Activated CD4-positive, alpha-beta memory T cell treated with anti-CD3 and anti-CD28 coated beads, Interleukin-2, amount 10 ng/mL, durations not matched to agents 7 days and 5 days (primary cell): ENCODE measurements at regions of chr19 and their contacts with region 1.

Region 1: GRCh38 chr19:10269333-10270179 is 1.4 kb upstream of the ICAM1 start:
- DNase-seq: peak; percentile 91
- H3K4me3 Mint-ChIP-seq: peak overlapping the region; percentile 83
- H3K27ac Mint-ChIP-seq: peak overlapping the region; percentile 93
- H3K4me1 Mint-ChIP-seq: peaks cover 45% of the 10 kb centered on the region
- H3K27me3 Mint-ChIP-seq: peaks cover 1% of the 10 kb centered on the region

Region 2: GRCh38 chr19:10279737-10280442 is 10.3 kb after region 1 on chr19:
- CTCF ChIA-PET with region 1: interaction called, 10 read pairs
- POLR2A ChIA-PET with region 1: interaction called, 105 read pairs
- DNase-seq: no peak
- H3K4me3 Mint-ChIP-seq: no peak overlapping the region
- H3K27ac Mint-ChIP-seq: peak overlapping the region; percentile 61
- H3K4me1 Mint-ChIP-seq: peaks cover 27% of the 10 kb centered on the region
- H3K27me3 Mint-ChIP-seq: no peaks in the 10 kb centered on the region

Region 3: GRCh38 chr19:10332955-10333757 is 63.6 kb after region 1 on chr19 and contains the start of gene RAVER1:
- CTCF ChIA-PET with region 1: interaction called, 23 read pairs
- POLR2A ChIA-PET with region 1: interaction called, 36 read pairs
- DNase-seq: peak; percentile 98
- H3K4me3 Mint-ChIP-seq: peak within 1 kb of the TSS; percentile 84
- H3K27ac Mint-ChIP-seq: peak within 1 kb of the TSS; percentile 90
- H3K4me1 Mint-ChIP-seq: peaks cover 40% of the 10 kb centered on the region
- H3K27me3 Mint-ChIP-seq: no peaks in the 10 kb centered on the region
- total RNA-seq, gene RAVER1: 62.1 to 68.6 TPM

Region 4: DNA sequence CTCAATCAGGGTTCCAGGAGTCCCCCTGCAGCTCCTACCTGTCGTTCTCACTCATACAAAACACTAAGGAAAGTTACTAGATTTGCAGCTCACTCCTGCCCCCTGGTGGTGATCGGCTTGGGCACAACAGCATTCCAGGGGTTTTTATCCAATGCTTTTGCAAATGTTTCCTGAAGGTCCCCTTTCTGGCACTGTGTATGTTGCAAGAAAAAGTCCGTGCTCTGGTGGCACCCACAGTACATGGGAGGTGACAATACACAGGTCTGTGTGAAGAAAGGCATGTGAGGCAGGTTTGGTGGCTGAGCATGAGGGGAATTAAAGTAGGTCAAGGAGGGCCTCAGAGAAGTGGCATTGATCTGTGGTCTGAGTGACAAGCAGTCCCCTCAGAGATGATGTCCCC is 119.4 kb after region 1 on chr19:
- CTCF ChIA-PET with region 1: interaction called, 238 read pairs
- POLR2A ChIA-PET with region 1: interaction called, 32 read pairs
- DNase-seq: peak; percentile 81
- H3K4me3 Mint-ChIP-seq: no peak overlapping the region
- H3K27ac Mint-ChIP-seq: peak overlapping the region; percentile 11
- H3K4me1 Mint-ChIP-seq: peaks cover 7% of the 10 kb centered on the region
- H3K27me3 Mint-ChIP-seq: no peaks in the 10 kb centered on the region

Region 5: DNA sequence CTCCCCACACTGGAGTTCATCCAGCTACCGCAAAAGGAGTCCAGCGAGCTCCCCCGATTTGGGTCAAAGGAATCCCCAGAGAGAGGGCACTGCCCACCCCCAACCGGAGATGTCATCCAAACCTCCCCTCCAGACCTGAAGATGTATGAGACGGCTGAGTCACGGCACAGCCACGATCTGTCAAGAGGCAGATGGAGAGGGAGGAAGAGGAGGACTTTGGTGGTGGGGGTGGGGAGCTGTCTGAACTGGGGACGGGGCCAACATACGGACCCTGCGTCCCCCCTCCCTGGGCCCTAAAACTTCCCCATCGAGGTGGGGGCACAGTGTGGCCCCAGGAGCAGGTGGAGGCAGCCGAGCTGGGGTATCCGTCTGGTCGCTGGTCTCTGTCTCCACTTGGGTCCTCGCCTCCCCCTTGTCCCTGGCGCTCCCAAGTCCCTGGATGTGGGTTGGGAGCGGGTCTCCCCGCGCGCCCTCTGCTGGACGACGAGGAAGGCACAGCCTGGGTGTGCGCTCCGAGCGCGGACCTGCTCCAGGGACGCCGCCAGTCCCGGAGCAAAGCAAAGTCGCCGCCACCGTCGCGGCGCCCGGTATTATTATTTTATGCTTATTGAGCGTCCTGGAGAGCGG is 154.6 kb after region 1 on chr19:
- CTCF ChIA-PET with region 1: interaction called, 15 read pairs
- POLR2A ChIA-PET with region 1: interaction called, 13 read pairs
- DNase-seq: peak; percentile 73
- H3K4me3 Mint-ChIP-seq: peak overlapping the region; percentile 75
- H3K27ac Mint-ChIP-seq: peak overlapping the region; percentile 88
- H3K4me1 Mint-ChIP-seq: peaks cover 89% of the 10 kb centered on the region
- H3K27me3 Mint-ChIP-seq: peaks cover 16% of the 10 kb centered on the region